ENCODE measurements at regions of chr1 and their contacts with region 1.

Region 1: DNA sequence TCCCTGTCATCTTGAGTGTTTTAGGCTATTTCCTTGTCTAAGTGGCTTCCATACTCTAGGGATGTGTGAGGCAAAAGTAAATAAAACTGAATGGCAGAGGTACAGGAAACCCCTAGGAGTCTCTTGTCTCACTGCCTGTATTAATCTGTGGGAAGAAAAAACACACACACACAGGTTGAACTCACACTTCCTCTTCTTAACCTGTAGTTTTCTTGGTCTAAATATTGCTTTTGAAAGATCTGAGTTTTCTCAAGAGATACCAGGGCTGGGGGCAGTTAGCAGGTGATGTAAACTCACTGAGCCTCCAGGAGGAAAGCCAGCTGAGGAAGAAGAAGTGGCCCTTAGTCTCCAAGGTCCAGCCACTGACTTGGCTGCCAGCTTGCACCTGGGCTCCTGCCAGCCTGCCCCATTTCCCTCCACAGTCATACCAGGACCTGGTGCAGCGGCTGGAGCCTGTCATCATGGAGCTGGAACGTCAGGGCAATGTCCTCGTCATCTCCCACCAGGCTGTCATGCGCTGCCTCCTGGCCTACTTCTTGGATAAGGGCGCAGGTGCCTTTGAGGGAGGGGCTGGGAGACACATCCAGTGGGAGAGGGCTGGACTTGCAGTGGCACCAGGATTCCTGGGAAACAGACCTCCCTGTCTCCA is 16.9 kb downstream of the PFKFB2 start:
- DNase-seq: no peak
- ATAC-seq: no peak
- H3K4me3 Mint-ChIP-seq: peak overlapping the region; percentile 57
- H3K27ac Mint-ChIP-seq: peak overlapping the region; percentile 90
- H3K4me1 Mint-ChIP-seq: peaks cover 41% of the 10 kb centered on the region
- H3K27me3 Mint-ChIP-seq: peaks cover 2% of the 10 kb centered on the region

Region 2: DNA sequence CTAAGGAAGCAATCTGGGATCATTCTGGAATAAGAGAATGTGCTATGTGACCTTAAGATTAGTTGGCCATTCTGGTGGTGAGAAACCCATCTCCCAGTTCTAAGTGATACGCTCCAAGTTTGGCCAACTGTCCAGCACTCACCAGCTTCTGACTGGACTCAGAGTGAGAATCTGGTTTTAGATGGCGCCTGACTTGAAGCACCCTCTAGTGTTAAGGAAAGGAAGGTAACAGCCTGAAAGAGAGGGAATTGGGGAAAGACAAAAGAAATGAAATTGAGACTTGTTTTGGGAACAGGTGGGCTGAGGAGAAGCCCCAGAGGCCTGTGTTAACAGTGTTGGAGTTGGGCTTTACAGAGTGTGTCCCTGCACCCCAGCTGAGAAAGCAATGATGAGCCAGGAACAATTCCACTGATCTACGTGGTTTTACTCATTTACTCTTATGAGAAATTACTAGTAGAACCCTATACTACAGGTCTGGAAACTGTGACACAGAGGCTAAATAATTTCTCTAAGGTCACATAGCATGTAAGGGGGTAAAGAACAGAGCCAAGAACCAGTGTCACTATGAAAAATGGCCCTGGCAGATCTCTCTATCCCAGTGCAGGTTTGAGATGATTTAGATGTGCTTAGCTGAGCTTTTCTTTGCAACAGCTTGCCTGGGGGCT is 90.5 kb before region 1 on chr1:
- POLR2A ChIA-PET with region 1: no interaction called
- DNase-seq: no peak
- ATAC-seq: no peak
- H3K4me3 Mint-ChIP-seq: no peak overlapping the region
- H3K27ac Mint-ChIP-seq: no peak overlapping the region
- H3K4me1 Mint-ChIP-seq: no peaks in the 10 kb centered on the region
- H3K27me3 Mint-ChIP-seq: peaks cover 49% of the 10 kb centered on the region

Region 3: GRCh38 chr1:207052911-207053769 is 16.8 kb before region 1 on chr1 and contains the start of gene PFKFB2:
- POLR2A ChIA-PET with region 1: interaction called, 16 read pairs
- DNase-seq: peak; percentile 97
- ATAC-seq: peak; percentile 91
- H3K4me3 Mint-ChIP-seq: peak within 1 kb of the TSS; percentile 99
- H3K27ac Mint-ChIP-seq: peak within 1 kb of the TSS; percentile 94
- H3K4me1 Mint-ChIP-seq: peaks cover 34% of the 10 kb centered on the region
- H3K27me3 Mint-ChIP-seq: no peaks in the 10 kb centered on the region
- total RNA-seq, gene PFKFB2: 4.6 to 4.8 TPM

Measured in activated naive CD8-positive, alpha-beta T cell treated with anti-CD3 and anti-CD28 coated beads, Interleukin-2, amount 10 ng/mL, durations not matched to agents 7 days and 5 days (primary cell).